ENCODE measurements at regions of chr2 and their contacts with region 1.

Region 1: GRCh38 chr2:101205521-101205998 is 47.1 kb upstream of the CNOT11 start:
- DNase-seq: peak; percentile 76
- H3K4me3 ChIP-seq: peak overlapping the region in 1 of 3 experiments; percentile 24
- H3K27ac ChIP-seq: no peak overlapping the region
- H3K4me1 ChIP-seq: peaks cover 1% of the 10 kb centered on the region
- H3K27me3 ChIP-seq: no peaks in the 10 kb centered on the region
- CTCF ChIP-seq: peak; percentile 51 to 65
- POLR2A ChIP-seq: no peak

Region 2: GRCh38 chr2:101001691-101002561 is 203.6 kb before region 1 on chr2 and contains the start of gene RPL31:
- CTCF ChIA-PET with region 1: interaction called, 11 read pairs
- POLR2A ChIA-PET with region 1: interaction called, 3 read pairs
- dilution Hi-C with region 1: no loop called
- intact Hi-C with region 1: no loop called
- DNase-seq: peak; percentile 95
- H3K4me3 ChIP-seq: peak within 1 kb of the TSS; percentile 82 to 94 (median 90)
- H3K27ac ChIP-seq: peak within 1 kb of the TSS; percentile 76
- H3K4me1 ChIP-seq: peaks cover 24% of the 10 kb centered on the region
- H3K27me3 ChIP-seq: no peaks in the 10 kb centered on the region
- CTCF ChIP-seq: no peak
- POLR2A ChIP-seq: peak; percentile 99
- total RNA-seq, gene RPL31: 1,337 and 1,355 TPM in 2 replicates

Region 3: DNA sequence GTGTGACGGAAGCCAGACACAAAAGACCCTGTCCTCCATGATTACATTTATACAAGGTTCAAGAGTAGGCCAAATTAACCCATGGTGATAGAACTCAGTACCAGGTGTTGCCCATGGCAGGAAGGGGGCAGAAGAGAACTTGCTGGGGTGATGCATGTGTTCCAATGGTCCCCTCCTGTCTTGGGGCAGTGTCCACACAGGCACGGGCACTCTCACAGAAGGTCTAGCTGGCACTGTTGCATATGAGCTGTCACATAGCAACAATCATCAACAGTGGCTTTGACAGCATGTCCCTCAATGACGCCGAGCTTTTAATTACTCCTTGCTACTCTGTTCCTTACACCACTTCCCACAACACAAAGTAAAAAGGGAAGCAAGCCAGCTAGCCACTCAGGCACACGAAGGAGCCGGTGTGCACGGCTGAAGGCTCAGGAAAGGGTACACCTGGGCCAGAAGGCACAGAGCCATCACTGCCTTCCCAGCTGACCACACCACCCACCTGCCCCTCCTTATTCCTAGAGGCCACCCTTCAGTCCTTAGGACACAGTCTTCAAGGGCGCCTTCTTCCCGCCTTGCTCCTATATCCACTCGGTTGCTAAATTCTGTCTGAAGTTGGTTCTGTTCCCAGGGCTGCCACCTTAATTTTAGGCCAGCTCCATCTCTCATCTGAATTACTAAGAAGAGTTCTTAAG is 174.6 kb before region 1 on chr2:
- CTCF ChIA-PET with region 1: interaction called, 162 read pairs
- POLR2A ChIA-PET with region 1: no interaction called
- dilution Hi-C with region 1: loop called (anchors 25 kb)
- intact Hi-C with region 1: loop called (anchors 1 kb)
- DNase-seq: no peak
- H3K4me3 ChIP-seq: no peak overlapping the region
- H3K27ac ChIP-seq: no peak overlapping the region
- H3K4me1 ChIP-seq: no peaks in the 10 kb centered on the region
- H3K27me3 ChIP-seq: no peaks in the 10 kb centered on the region
- CTCF ChIP-seq: no peak
- POLR2A ChIP-seq: no peak

Region 4: GRCh38 chr2:101047075-101047766 is 158.3 kb before region 1 on chr2:
- CTCF ChIA-PET with region 1: interaction called, 11 read pairs
- POLR2A ChIA-PET with region 1: no interaction called
- dilution Hi-C with region 1: loop called (anchors 25 kb)
- intact Hi-C with region 1: no loop called
- DNase-seq: peak; percentile 79
- H3K4me3 ChIP-seq: no peak overlapping the region
- H3K27ac ChIP-seq: peak overlapping the region; percentile 12
- H3K4me1 ChIP-seq: peaks cover 10% of the 10 kb centered on the region
- H3K27me3 ChIP-seq: no peaks in the 10 kb centered on the region
- CTCF ChIP-seq: no peak
- POLR2A ChIP-seq: no peak

Region 5: DNA sequence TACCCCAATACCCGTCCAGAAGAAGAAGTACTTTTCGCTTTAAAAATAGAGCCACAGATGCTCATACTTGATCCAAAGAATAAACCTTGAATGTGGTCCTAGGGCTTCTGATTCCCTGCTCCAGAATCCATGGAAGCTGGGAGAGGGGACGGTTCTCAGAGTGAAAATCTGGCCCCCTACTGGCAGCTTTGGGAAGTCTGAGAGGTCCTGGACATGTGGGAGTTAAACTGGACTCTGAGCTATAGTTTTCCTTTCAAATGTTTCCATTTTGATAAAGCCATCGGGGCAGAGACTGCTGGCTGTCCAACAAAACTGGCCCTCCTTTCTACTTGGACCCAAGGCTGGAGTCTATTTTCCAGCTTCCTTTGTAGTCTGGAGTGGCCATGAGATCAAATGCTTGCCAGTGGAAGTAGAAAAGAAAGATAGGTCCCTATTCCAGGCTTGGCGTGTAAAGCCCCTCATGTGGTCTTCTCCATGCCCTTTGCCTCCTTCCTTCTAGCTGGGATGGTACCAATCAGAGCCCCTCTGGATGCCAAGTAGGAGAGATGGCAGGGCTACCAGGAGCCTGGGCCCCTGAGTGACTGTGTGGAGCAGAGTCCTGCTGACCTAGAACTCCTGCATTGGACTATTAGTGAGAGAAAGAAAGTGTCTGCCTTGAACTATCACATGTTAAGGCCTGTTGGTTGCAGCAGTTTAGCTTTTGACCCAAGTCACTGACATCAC is 16.7 kb before region 1 on chr2:
- CTCF ChIA-PET with region 1: interaction called, 67 read pairs
- POLR2A ChIA-PET with region 1: no interaction called
- dilution Hi-C with region 1: no loop called
- intact Hi-C with region 1: no loop called
- DNase-seq: peak; percentile 41
- H3K4me3 ChIP-seq: no peak overlapping the region
- H3K27ac ChIP-seq: no peak overlapping the region
- H3K4me1 ChIP-seq: no peaks in the 10 kb centered on the region
- H3K27me3 ChIP-seq: peaks cover 0 to 2% of the 10 kb centered on the region in 2 experiments
- CTCF ChIP-seq: peak; percentile 74 to 78
- POLR2A ChIP-seq: no peak

Region 6: GRCh38 chr2:101300836-101301235 is 95.3 kb after region 1 on chr2:
- CTCF ChIA-PET with region 1: no interaction called
- POLR2A ChIA-PET with region 1: no interaction called
- dilution Hi-C with region 1: no loop called
- intact Hi-C with region 1: no loop called
- DNase-seq: no peak
- H3K4me3 ChIP-seq: no peak overlapping the region
- H3K27ac ChIP-seq: no peak overlapping the region
- H3K4me1 ChIP-seq: peaks cover 28% of the 10 kb centered on the region
- H3K27me3 ChIP-seq: no peaks in the 10 kb centered on the region
- CTCF ChIP-seq: no peak
- POLR2A ChIP-seq: no peak

Measured in endothelial cell of umbilical vein (primary cell).